Motor neuron (in vitro differentiated cells): ENCODE measurements at regions of chr9 and their contacts with region 1.

Region 1: DNA sequence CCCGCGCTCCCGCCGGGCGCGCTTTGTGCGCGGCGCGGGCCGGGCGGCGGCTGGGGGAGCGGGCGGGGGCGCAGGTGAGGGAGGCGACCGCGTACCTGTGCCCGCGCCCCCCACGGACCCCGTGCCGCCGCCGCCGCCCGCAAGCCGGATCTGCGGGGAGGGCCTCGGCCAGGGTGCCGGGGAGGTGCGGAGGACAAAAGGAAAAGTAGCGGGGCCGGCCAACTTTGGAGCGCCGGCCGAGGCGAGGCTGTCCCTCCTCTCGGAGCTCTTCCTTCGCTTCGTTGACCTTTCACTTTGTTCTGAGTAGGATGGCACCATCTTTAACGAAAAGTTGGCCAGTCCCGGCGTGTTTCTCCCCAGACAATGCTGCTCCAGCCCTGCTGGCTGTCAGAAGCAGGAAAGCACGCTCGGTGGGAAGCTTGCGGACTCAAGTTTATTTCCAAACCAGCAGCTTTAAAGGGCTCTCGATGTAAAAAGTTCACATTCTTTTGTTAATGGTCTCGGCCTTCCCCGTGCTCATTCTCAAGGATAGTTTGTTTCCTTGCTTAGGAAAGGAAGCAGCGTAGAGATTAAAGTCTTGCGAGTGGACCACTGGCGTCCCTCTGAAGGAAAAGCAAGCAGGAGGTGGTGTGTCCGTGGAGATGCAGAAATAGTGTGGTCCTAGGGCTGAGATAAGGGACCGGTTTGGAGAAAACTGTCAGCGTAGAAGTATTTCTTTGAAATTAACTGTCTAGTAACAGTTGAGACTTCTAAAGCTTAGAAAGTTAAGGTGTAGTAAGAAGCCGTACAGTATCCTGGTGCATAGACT is 639 bp downstream of the EHMT1 start:
- ATAC-seq: peak; percentile 4 to 41 (median 12)
- H3K4me3 ChIP-seq: peak overlapping the region; percentile 60 to 99 (median 81)
- H3K27ac ChIP-seq: peak overlapping the region; percentile 23 to 93
- H3K4me1 ChIP-seq: peaks cover 20 to 26% of the 10 kb centered on the region in 2 donors

Region 2: GRCh38 chr9:137021979-137022619 is 597.3 kb before region 1 on chr9:
- in situ Hi-C with region 1: no loop called
- ATAC-seq: peak in 7 of 8 experiments; percentile 25 to 97 (median 44)
- H3K4me3 ChIP-seq: no peak overlapping the region
- H3K27ac ChIP-seq: no peak overlapping the region
- H3K4me1 ChIP-seq: peaks cover 22% of the 10 kb centered on the region in 2 donors

Region 3: GRCh38 chr9:137689745-137690529 is 70.5 kb after region 1 on chr9:
- in situ Hi-C with region 1: loop called in 1 of 9 experiments (anchors 10 kb)
- ATAC-seq: peak; percentile 26 to 61 (median 45)
- H3K4me3 ChIP-seq: no peak overlapping the region
- H3K27ac ChIP-seq: peak overlapping the region in 1 of 2 donors; percentile 56
- H3K4me1 ChIP-seq: peaks cover 21 to 30% of the 10 kb centered on the region in 2 donors